ENCODE measurements at regions of chr7 and their contacts with region 1.

Region 1: DNA sequence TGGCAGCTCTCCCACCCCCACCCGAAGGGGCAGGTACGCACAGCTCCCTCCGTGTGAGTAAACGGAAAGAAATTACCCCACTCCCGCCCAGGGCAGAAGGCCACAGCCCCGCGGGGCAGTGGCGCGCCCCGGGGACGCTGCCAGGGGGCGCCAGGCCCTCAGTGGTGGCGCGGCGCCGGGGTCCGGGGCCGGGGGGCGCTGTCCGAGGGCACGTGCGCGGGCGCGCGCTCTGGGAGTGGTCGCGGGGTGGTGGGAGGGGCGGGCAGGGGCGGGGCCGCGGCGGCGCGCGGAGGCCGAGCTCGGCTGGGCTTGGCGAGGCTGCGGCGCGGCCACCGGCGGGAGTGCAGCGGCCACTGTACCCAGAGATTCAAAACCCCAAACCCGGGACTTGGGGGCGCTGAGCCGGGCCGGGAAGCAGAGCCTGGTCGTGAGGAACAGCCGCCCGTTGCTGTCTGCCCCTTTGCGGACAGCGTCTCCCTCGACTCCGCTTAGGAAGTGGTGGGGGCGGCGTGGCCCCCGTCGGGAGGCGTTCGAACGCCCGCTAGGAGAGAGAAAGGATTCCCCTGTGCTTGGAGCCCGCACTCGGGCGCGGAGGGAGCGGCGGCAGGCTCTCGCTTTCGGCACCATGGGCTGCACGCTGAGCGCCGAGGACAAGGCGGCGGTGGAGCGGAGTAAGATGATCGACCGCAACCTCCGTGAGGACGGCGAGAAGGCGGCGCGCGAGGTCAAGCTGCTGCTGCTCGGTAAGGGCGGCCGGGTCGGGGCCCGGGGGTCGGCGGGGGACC is at the start of gene GNAI1:
- DNase-seq: peak; percentile 71
- ATAC-seq: peak; percentile 89
- total RNA-seq, gene GNAI1: 11.3 TPM

Region 2: DNA sequence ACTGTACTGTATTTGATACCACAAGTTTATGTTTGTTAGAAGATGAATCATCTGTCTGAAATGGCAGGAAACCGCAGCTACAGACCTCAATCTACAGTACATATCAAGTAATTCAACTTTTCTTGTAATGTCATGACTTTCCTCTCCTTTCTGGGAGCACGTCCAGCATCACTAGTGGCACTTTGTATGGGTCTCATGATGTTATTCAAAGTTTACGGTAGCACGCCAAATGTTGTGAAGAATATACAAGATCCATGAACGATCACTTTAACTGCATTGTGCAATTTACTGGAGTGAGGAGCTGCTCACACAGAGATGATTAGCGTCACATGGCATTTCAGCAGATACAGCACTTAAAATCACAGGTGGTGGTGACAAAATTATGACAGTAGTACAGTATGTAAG is 257.9 kb before region 1 on chr7:
- intact Hi-C with region 1: no loop called
- DNase-seq: no peak
- ATAC-seq: no peak

Region 3: GRCh38 chr7:80277434-80278427 is 143.0 kb after region 1 on chr7:
- intact Hi-C with region 1: loop called (anchors 10 kb)
- DNase-seq: no peak
- ATAC-seq: peak; percentile 36